ENCODE measurements at regions of chr11 and their contacts with region 1.

Region 1: GRCh38 chr11:69642913-69643632 is 2.1 kb downstream of the CCND1 start:
- DNase-seq: peak; percentile 93
- H3K4me3 Mint-ChIP-seq: peak overlapping the region; percentile 70
- H3K27ac Mint-ChIP-seq: no peak overlapping the region
- H3K4me1 Mint-ChIP-seq: peaks cover 3% of the 10 kb centered on the region
- H3K27me3 Mint-ChIP-seq: peaks cover 27% of the 10 kb centered on the region

Region 2: GRCh38 chr11:69101115-69101791 is 541.8 kb before region 1 on chr11:
- intact Hi-C with region 1: loop called (anchors 1 kb)
- DNase-seq: peak; percentile 92
- H3K4me3 Mint-ChIP-seq: no peak overlapping the region
- H3K27ac Mint-ChIP-seq: no peak overlapping the region
- H3K4me1 Mint-ChIP-seq: peaks cover 3% of the 10 kb centered on the region
- H3K27me3 Mint-ChIP-seq: no peaks in the 10 kb centered on the region

Region 3: DNA sequence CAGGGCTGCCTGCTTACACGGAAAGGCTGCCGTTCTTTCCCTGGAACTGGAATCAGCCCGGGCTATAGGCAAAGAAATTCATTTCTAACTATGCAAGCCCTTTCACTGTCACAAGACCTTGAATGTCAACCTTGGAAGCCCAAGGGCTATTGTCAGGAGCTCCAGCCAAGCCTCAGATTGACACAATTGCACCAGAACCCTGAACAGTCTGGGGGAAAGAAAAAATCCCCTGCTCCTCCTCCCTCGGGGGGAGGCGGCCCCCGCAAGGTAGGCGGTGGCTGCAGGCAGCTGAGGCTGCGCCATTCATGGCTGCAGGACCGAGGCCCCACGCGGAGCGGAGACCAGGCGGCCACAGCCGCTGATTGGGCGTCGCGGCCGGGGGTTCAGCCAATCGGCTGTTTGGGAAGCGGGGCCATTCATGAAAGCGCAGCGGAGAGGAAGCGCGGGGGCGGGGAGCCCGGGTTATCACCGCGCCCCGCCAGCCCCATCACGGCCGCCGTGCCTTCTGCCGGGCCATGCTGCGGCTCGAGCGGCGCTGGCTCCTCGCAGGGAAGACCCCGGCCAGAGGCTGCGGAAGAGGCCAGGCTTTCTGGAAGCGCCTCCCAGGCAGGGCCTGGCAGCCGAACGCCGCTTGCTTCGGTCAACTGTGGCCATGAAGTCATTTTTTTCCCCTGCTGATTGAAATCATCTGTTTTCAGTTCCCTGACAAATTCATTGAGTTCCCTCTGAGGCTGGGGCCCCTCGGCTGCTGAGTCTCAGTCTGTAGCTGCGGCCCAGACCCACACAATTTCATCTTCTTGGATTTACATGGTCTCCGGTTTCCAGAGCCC is 199.7 kb before region 1 on chr11:
- intact Hi-C with region 1: loop called (anchors 5 kb)
- DNase-seq: peak; percentile 92
- H3K4me3 Mint-ChIP-seq: peak overlapping the region; percentile 72
- H3K27ac Mint-ChIP-seq: peak overlapping the region; percentile 60
- H3K4me1 Mint-ChIP-seq: peaks cover 11% of the 10 kb centered on the region
- H3K27me3 Mint-ChIP-seq: peaks cover 13% of the 10 kb centered on the region

Region 4: GRCh38 chr11:69700278-69701140 is 57.4 kb after region 1 on chr11:
- intact Hi-C with region 1: loop called (anchors 5 kb)
- DNase-seq: no peak
- H3K4me3 Mint-ChIP-seq: no peak overlapping the region
- H3K27ac Mint-ChIP-seq: no peak overlapping the region
- H3K4me1 Mint-ChIP-seq: no peaks in the 10 kb centered on the region
- H3K27me3 Mint-ChIP-seq: peaks cover 47% of the 10 kb centered on the region